ENCODE measurements at regions of chr13 and their contacts with region 1.

Region 1: GRCh38 chr13:97367016-97367822 is 66.8 kb upstream of the RAP2A start:
- DNase-seq: no peak
- H3K4me3 ChIP-seq: no peak overlapping the region
- H3K27ac ChIP-seq: no peak overlapping the region
- H3K4me1 ChIP-seq: no peaks in the 10 kb centered on the region
- H3K27me3 ChIP-seq: no peaks in the 10 kb centered on the region
- CTCF ChIP-seq: no peak
- POLR2A ChIP-seq: no peak

Region 2: GRCh38 chr13:97124916-97125809 is 242.1 kb before region 1 on chr13:
- intact Hi-C with region 1: no loop called
- DNase-seq: no peak
- H3K4me3 ChIP-seq: no peak overlapping the region
- H3K27ac ChIP-seq: peak overlapping the region in 1 of 2 donors; percentile 9
- H3K4me1 ChIP-seq: no peaks in the 10 kb centered on the region
- H3K27me3 ChIP-seq: no peaks in the 10 kb centered on the region
- CTCF ChIP-seq: peak in 1 of 4 experiments; percentile 4
- POLR2A ChIP-seq: no peak

Region 3: DNA sequence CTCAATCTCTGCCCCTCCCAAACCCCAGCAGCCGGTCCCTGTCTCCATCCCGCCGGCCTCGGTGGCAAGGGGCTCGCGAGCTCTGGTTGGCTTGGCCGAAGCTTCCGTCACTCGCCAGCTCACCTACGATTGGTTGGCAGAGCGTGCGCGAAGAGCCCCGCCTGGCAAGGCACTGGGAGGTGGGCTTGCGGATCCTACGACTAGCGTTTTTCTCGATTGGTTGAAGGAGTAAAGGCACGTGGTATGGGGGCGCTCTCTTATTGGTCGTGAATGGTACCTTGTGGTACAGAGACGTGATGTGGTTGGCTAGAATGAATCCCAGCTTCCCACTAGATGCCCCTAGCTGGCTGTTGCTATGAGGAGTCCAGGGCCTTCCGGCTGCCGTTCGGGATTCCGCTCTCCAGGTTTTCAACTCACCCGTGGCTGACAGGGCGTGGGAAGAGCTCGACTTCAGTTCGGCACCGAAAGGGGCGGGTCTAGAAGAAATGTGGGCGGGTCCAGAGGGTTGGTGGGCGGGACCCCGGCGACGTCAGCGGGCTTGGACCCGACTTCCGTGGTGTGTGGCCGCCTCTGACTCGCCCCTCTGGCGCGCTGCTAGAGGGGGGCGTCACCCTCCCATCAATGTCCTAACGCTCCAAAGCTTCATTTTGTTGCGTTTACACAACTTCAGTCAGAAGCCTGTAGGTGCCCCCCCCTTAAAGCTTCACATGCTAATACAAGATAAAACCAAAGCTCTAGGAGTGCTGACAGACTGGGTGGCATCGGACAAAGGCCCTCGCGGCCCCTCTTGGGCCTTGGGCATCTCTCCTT is 65.9 kb after region 1 on chr13:
- intact Hi-C with region 1: loop called (anchors 5 kb)
- DNase-seq: peak; percentile 99
- H3K4me3 ChIP-seq: peak overlapping the region; percentile 77 to 80
- H3K27ac ChIP-seq: peak overlapping the region; percentile 100
- H3K4me1 ChIP-seq: no peaks in the 10 kb centered on the region
- H3K27me3 ChIP-seq: no peaks in the 10 kb centered on the region
- CTCF ChIP-seq: peak in 1 of 4 experiments; percentile 8
- POLR2A ChIP-seq: peak; percentile 55